K562 (cell line): ENCODE measurements at regions of chr4 and their contacts with region 1.

Region 1: GRCh38 chr4:10157478-10158332 is 41.1 kb upstream of the WDR1 start:
- DNase-seq: peak; percentile 79 to 83 (median 81)
- ATAC-seq: peak; percentile 85
- H3K4me3 ChIP-seq: no peak overlapping the region
- H3K27ac ChIP-seq: no peak overlapping the region
- H3K4me1 ChIP-seq: peaks cover 0 to 11% of the 10 kb centered on the region in 2 experiments; a peak in 3 of 5 replicates
- H3K27me3 ChIP-seq: peaks cover 2 to 7% of the 10 kb centered on the region in 2 experiments; a peak in 1 of 5 replicates
- CTCF ChIP-seq: peak; percentile 87 to 94 (median 92)
- EP300 ChIP-seq: no peak
- POLR2A ChIP-seq: no peak
- RAD21 ChIP-seq: peak; percentile 87 to 96

Region 2: GRCh38 chr4:10129196-10130177 is 28.2 kb before region 1 on chr4:
- CTCF ChIA-PET with region 1: no interaction called
- POLR2A ChIA-PET with region 1: no interaction called
- in situ Hi-C with region 1: no loop called
- intact Hi-C with region 1: no loop called
- DNase-seq: no peak
- ATAC-seq: no peak
- H3K4me3 ChIP-seq: no peak overlapping the region
- H3K27ac ChIP-seq: no peak overlapping the region
- H3K4me1 ChIP-seq: no peaks in the 10 kb centered on the region; a peak in 1 of 5 replicates
- H3K27me3 ChIP-seq: peaks cover 31 to 68% of the 10 kb centered on the region in 2 experiments; a peak in 4 of 5 replicates
- CTCF ChIP-seq: no peak
- EP300 ChIP-seq: no peak
- POLR2A ChIP-seq: no peak
- RAD21 ChIP-seq: no peak

Region 3: DNA sequence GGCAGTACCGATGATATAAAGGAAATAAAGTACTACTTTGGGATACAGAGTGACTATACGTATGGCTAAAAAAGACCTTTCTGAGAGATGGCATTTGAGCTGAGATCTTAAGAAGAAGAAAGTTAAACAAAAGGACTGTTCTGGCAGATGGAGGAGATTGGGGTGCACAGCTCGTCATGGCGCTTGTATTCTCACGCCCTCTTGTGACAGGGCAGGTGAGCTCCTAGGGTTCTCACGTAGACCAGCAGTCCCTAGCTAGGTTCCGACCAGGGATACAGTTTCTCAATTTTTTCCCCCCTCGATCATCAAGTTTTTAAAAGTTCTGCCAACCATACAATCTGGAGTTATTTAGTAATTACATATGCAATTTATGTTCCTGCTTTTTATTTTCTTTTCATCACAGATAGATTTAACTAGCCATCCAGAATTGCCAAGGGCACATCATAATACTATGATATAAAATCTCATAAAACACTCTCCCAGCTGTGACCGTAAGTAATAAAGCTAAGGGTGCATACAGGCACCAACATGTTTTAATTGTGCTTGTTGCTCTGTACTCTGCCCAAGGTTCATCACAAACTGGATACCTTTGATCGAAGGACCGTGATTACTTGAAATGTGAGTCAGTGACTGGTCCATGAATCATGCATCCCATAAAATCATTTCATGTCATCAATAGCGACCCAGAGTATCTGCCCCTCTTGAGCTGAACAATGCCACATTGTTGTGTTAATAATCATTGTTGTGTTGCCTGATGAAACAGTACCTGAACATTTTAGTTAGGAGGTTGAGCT is 368.9 kb after region 1 on chr4:
- CTCF ChIA-PET with region 1: no interaction called
- POLR2A ChIA-PET with region 1: no interaction called
- in situ Hi-C with region 1: no loop called
- intact Hi-C with region 1: loop called (anchors 5 kb)
- DNase-seq: peak in 3 of 4 experiments; percentile 11 to 42 (median 38)
- ATAC-seq: peak; percentile 92
- H3K4me3 ChIP-seq: no peak overlapping the region
- H3K27ac ChIP-seq: no peak overlapping the region
- H3K4me1 ChIP-seq: no peaks in the 10 kb centered on the region; a peak in 2 of 5 replicates
- H3K27me3 ChIP-seq: peaks cover 0 to 4% of the 10 kb centered on the region in 2 experiments; a peak in 2 of 5 replicates
- CTCF ChIP-seq: peak; percentile 46 to 59 (median 51); a peak in 5 of 6 replicates
- EP300 ChIP-seq: no peak
- POLR2A ChIP-seq: no peak
- RAD21 ChIP-seq: peak; percentile 56 to 69; a peak in 3 of 4 replicates